ENCODE measurements at regions of chr2 and their contacts with region 1.

Region 1: GRCh38 chr2:109084341-109084740 is 44.7 kb upstream of the SH3RF3 start:
- DNase-seq: peak in 1 of 2 donors; percentile 65
- H3K4me3 ChIP-seq: no peak overlapping the region
- CTCF ChIP-seq: no peak
- POLR2A ChIP-seq: no peak

Region 2: GRCh38 chr2:108314586-108315296 is 769.6 kb before region 1 on chr2:
- intact Hi-C with region 1: loop called (anchors 5 kb)
- DNase-seq: peak in 1 of 2 donors; percentile 29
- H3K4me3 ChIP-seq: no peak overlapping the region
- CTCF ChIP-seq: no peak
- POLR2A ChIP-seq: no peak